CD4-positive, alpha-beta T cell (primary cell): ENCODE measurements at regions of chr20 and their contacts with region 1.

Region 1: DNA sequence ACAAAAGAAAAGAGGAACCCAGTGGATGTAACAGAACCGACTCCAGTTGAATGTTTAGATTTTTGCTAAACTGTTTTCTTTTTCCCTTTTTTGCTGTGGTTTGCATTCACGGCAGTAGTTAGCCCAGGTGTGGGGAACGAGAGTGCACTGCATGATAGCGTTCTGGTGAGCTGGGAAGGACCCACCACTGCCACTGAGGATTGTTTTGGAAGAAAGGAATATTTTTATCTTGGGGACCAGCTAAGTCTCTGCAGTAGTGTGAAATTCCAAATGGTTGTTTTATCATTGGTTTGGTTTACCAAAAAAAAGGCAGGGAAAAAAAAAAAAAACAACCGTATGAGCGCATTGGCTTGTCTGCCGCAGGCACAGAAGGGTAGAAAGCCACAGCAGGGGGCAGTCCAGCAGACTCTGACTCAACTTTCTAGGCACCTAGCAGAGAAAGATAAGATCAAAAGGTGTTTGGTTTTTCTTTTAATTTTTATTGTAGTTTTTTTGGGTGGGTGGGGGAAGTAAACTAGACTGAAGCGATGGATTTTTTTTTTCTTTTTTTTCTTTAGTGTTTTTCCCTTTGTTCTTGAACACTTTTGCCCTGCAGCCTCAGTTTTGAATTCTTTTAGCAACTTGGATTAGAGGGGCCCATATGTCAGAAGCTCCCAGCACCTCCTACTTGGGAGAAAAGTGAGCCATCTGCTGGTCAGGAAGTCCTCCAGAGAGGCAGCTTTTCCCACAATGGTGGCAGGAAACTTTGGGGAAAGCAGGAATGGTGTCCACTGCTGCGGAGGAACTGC is 13.5 kb upstream of the RAB5IF start:
- DNase-seq: peak in 11 of 14 experiments; percentile 27 to 88 (median 55)
- ATAC-seq: peak; percentile 51
- H3K4me3 ChIP-seq: no peak overlapping the region
- H3K4me3 Mint-ChIP-seq: peak overlapping the region; percentile 63
- H3K27ac ChIP-seq: peak overlapping the region in 1 of 2 donors; percentile 54
- H3K27ac Mint-ChIP-seq: peak overlapping the region; percentile 95
- H3K4me1 ChIP-seq: peaks cover 69% of the 10 kb centered on the region
- H3K4me1 Mint-ChIP-seq: peaks cover 52% of the 10 kb centered on the region
- H3K27me3 ChIP-seq: no peaks in the 10 kb centered on the region
- H3K27me3 Mint-ChIP-seq: no peaks in the 10 kb centered on the region
- CTCF ChIP-seq: peak; percentile 59

Region 2: GRCh38 chr20:36562724-36563123 is 29.3 kb before region 1 on chr20:
- CTCF ChIA-PET with region 1: no interaction called
- POLR2A ChIA-PET with region 1: interaction called, 4 read pairs
- intact Hi-C with region 1: loop called in 1 of 2 experiments (anchors 1 kb)
- DNase-seq: no peak
- ATAC-seq: no peak
- H3K4me3 ChIP-seq: no peak overlapping the region
- H3K4me3 Mint-ChIP-seq: no peak overlapping the region
- H3K27ac ChIP-seq: no peak overlapping the region
- H3K27ac Mint-ChIP-seq: no peak overlapping the region
- H3K4me1 ChIP-seq: peaks cover 2% of the 10 kb centered on the region
- H3K4me1 Mint-ChIP-seq: no peaks in the 10 kb centered on the region
- H3K27me3 ChIP-seq: no peaks in the 10 kb centered on the region
- H3K27me3 Mint-ChIP-seq: no peaks in the 10 kb centered on the region
- CTCF ChIP-seq: no peak